ENCODE measurements at regions of chr12 and their contacts with region 1.

Region 1: DNA sequence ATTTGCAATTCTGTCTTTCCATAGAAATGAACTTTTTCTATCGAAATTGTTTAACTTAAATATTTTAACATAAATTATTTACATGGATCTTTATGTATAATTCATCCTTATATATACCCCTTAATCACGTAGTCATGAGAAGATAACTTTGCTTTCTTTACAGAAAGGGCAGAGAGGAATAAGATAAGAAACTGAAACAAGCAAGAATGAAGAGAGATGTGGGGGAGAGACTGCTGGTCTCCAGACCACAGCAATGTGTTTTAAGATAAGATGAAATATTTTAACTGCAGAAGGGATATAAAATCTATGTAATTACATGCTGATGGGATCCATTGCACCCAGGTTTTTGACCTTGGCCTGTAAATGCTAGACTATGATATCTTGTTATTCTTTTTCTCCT is 34.7 kb upstream of the DNM1L start:
- DNase-seq: no peak
- ATAC-seq: no peak
- H3K4me3 ChIP-seq: no peak overlapping the region
- H3K27ac ChIP-seq: no peak overlapping the region
- H3K4me1 ChIP-seq: peaks cover 0 to 9% (median 0%) of the 10 kb centered on the region in 12 donors
- H3K27me3 ChIP-seq: no peaks in the 10 kb centered on the region
- CTCF ChIP-seq: no peak
- POLR2A ChIP-seq: no peak

Region 2: GRCh38 chr12:31890295-31891285 is 753.8 kb before region 1 on chr12:
- intact Hi-C with region 1: no loop called
- DNase-seq: no peak
- ATAC-seq: no peak
- H3K4me3 ChIP-seq: no peak overlapping the region
- H3K27ac ChIP-seq: peak overlapping the region in 2 of 12 donors; percentile 2 to 78
- H3K4me1 ChIP-seq: peaks cover 0 to 26% (median 0%) of the 10 kb centered on the region in 12 donors
- H3K27me3 ChIP-seq: no peaks in the 10 kb centered on the region
- CTCF ChIP-seq: no peak
- POLR2A ChIP-seq: no peak

Region 3: DNA sequence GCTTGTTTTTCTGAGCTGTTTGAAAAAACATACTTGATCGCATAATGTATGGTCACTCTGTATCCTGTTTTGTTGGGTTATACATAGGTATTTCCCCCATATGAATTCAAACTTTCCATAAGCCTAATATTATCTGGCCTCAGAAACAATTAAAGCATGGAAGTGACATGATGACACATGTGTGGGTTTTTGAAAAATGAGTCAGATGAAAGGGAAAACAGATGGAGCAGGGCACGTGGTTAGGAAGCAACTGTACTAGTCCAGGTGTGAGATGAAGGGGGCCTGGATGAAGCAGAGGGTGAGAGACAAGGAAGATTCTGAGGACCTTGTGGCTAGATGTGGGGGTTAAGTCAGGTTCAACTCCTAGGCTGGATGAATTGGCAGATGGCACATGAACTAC is 58.0 kb before region 1 on chr12:
- intact Hi-C with region 1: loop called in 1 of 10 experiments (anchors 10 kb)
- DNase-seq: no peak
- ATAC-seq: peak in 1 of 4 donors; percentile 26
- H3K4me3 ChIP-seq: no peak overlapping the region
- H3K27ac ChIP-seq: peak overlapping the region in 1 of 12 donors; percentile 39
- H3K4me1 ChIP-seq: peaks cover 0 to 53% (median 3%) of the 10 kb centered on the region in 12 donors
- H3K27me3 ChIP-seq: no peaks in the 10 kb centered on the region
- CTCF ChIP-seq: no peak
- POLR2A ChIP-seq: no peak